PC-3 (cell line): ENCODE measurements at regions of chr1 and their contacts with region 1.

Region 1: GRCh38 chr1:8409106-8409505 is 91.2 kb downstream of the SLC45A1 start:
- DNase-seq: peak; percentile 35
- ATAC-seq: peak; percentile 55
- H3K4me3 ChIP-seq: no peak overlapping the region
- H3K27ac ChIP-seq: peak overlapping the region; percentile 62
- H3K4me1 ChIP-seq: peaks cover 39% of the 10 kb centered on the region
- H3K27me3 ChIP-seq: no peaks in the 10 kb centered on the region
- CTCF ChIP-seq: peak; percentile 53

Region 2: GRCh38 chr1:7549277-7550161 is 859.6 kb before region 1 on chr1:
- CTCF ChIA-PET with region 1: interaction called, 11 read pairs
- POLR2A ChIA-PET with region 1: no interaction called
- intact Hi-C with region 1: no loop called
- DNase-seq: peak; percentile 74
- ATAC-seq: peak; percentile 61
- H3K4me3 ChIP-seq: no peak overlapping the region
- H3K27ac ChIP-seq: peak overlapping the region; percentile 24
- H3K4me1 ChIP-seq: peaks cover 12% of the 10 kb centered on the region; the same call in 1 of the 2 replicates
- H3K27me3 ChIP-seq: peaks cover 20% of the 10 kb centered on the region
- CTCF ChIP-seq: no peak

Region 3: DNA sequence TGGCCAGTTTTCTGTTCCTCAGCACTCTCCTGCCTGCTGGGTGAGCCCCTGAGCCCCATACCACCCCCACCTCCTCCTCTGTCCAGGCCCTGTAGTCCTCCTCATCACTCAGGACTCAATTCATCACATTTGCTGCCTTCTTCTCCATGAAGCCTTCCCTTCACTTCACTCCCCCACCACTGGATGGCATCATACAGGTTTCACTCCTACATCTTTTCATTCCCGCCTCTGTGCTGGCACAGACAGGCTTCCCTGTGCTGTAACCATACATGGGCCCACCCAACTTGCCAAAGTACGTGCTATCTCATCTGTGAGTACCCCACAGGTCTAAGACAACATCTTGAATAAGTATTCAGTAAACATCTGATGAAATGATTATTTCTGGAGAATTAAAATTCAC is 34.3 kb before region 1 on chr1:
- CTCF ChIA-PET with region 1: interaction called, 4 read pairs
- POLR2A ChIA-PET with region 1: no interaction called
- intact Hi-C with region 1: loop called (anchors 2 kb)
- DNase-seq: peak; percentile 66
- ATAC-seq: peak; percentile 57
- H3K4me3 ChIP-seq: no peak overlapping the region
- H3K27ac ChIP-seq: no peak overlapping the region
- H3K4me1 ChIP-seq: peaks cover 9% of the 10 kb centered on the region
- H3K27me3 ChIP-seq: no peaks in the 10 kb centered on the region
- CTCF ChIP-seq: peak; percentile 78

Region 4: DNA sequence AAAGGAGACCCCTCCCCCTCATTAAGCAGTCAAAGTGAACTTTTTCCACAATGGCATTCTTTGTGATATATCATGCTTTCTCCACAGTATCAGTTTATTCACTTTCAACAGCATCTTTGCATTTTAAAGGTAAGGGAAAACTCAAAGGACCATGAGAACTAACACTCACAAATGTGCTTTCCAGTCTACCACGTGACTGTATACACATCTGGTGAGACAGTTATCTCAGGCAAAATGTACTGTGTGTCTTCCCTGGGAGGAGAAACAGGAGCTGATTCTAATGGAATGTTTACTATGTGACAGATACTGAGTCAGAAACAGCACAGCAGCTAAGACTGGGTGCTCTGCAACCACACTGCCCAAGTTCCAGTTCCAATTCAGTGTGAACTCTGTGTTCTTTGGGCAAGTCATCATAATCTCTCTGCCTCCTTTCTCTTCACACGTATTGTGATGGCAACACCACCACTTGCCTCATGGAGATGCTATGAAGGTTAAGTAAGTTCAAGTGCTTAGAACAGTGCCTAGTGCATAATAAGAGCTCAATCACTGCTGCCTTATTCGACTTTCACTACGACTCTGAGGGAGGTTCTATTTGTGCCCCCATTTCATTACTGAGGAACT is 12.2 kb before region 1 on chr1:
- CTCF ChIA-PET with region 1: interaction called, 6 read pairs
- POLR2A ChIA-PET with region 1: no interaction called
- intact Hi-C with region 1: loop called (anchors 1 kb)
- DNase-seq: peak; percentile 97
- ATAC-seq: peak; percentile 85
- H3K4me3 ChIP-seq: no peak overlapping the region
- H3K27ac ChIP-seq: peak overlapping the region; percentile 97
- H3K4me1 ChIP-seq: peaks cover 57% of the 10 kb centered on the region
- H3K27me3 ChIP-seq: no peaks in the 10 kb centered on the region
- CTCF ChIP-seq: no peak

Region 5: GRCh38 chr1:10225573-10225972 is 1816.5 kb after region 1 on chr1:
- CTCF ChIA-PET with region 1: no interaction called
- POLR2A ChIA-PET with region 1: no interaction called
- intact Hi-C with region 1: no loop called
- DNase-seq: no peak
- ATAC-seq: no peak
- H3K4me3 ChIP-seq: no peak overlapping the region
- H3K27ac ChIP-seq: no peak overlapping the region
- H3K4me1 ChIP-seq: no peaks in the 10 kb centered on the region
- H3K27me3 ChIP-seq: no peaks in the 10 kb centered on the region
- CTCF ChIP-seq: no peak